Lower lobe of right lung (tissue), 2 donors: ENCODE measurements at regions of chr12 and their contacts with region 1.

Region 1: DNA sequence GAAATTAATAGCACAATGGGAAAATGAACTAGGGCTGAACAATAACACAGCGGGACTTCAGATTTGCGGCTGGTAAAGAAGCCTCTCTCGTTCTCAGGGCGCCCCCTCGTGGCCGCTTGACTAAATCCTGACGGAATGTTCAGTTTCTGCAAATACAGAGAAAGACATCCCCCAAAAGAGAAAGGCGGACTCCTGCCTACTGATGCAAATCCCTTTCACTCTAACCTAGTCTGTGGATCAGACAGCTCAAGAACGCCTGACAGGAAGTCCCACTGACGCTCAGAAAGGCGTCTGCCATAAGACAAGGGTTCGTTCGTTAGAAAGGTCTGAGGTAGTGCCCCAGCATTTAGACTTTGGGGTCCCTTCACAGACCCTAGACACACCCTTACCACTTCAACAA is 2.5 kb downstream of the NUAK1 start:
- DNase-seq: peak; percentile 88
- ATAC-seq: peak; percentile 40 to 44
- H3K4me3 ChIP-seq: peak overlapping the region; percentile 71
- H3K27ac ChIP-seq: peak overlapping the region; percentile 88
- H3K4me1 ChIP-seq: peaks cover 46% of the 10 kb centered on the region
- H3K27me3 ChIP-seq: peaks cover 55% of the 10 kb centered on the region
- CTCF ChIP-seq: peak; percentile 85

Region 2: DNA sequence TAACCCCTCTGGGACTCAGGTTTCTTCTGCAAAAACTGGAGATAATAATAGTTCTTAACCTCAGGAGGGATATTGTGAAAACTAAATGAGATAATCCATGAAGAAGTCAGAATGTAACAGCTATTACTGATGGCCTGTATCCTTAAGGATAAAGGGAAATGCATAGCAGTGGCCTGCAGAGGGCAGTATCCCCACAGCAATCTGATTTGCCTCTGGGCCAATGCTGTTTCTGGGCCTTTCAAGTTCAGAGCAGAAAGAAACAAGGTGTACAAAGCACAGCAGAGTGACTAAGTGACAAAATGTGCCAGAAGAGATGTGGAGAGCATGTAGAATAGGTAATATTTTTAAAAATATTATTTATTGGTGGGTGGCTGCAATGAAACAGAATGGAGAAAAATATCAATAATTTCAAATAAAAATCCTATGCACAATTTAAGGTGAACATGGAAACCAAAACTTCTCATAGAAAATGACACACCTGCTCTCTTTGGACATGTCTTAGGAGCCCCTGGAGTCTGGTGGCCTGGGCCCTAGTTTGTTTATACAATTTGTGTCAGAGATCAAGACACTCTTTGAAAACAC is 715.5 kb before region 1 on chr12:
- intact Hi-C with region 1: loop called (anchors 5 kb)
- DNase-seq: peak; percentile 58
- ATAC-seq: peak; percentile 88
- H3K4me3 ChIP-seq: no peak overlapping the region
- H3K27ac ChIP-seq: no peak overlapping the region
- H3K4me1 ChIP-seq: peaks cover 4% of the 10 kb centered on the region
- H3K27me3 ChIP-seq: no peaks in the 10 kb centered on the region
- CTCF ChIP-seq: peak; percentile 92

Region 3: DNA sequence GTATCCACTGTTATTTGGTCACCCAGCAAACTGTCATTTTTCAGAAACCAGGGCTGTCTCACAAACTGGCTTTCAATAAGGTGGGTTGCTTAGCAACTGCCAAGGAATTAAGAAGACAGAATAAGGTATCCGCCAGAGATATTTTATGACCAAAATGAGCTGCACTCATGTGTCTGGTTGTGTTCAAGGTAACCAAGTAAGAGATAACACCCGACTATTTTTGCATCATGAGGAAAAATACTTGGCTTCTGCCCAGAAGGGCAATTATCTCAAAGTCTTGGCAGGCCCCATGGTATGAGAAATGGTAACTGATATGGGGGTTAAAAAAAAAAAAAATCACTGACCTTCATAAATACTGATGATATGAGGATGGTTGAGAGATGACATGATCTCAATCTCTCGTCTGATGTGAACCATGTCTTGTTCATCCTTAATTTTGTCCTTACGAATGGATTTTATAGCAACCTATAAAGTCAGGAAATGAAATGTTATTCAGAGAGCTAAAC is 30.1 kb before region 1 on chr12:
- intact Hi-C with region 1: no loop called
- DNase-seq: no peak
- ATAC-seq: no peak
- H3K4me3 ChIP-seq: no peak overlapping the region
- H3K27ac ChIP-seq: no peak overlapping the region
- H3K4me1 ChIP-seq: peaks cover 29% of the 10 kb centered on the region
- H3K27me3 ChIP-seq: no peaks in the 10 kb centered on the region
- CTCF ChIP-seq: no peak